ENCODE measurements at regions of chr1 and their contacts with region 1.

Region 1: DNA sequence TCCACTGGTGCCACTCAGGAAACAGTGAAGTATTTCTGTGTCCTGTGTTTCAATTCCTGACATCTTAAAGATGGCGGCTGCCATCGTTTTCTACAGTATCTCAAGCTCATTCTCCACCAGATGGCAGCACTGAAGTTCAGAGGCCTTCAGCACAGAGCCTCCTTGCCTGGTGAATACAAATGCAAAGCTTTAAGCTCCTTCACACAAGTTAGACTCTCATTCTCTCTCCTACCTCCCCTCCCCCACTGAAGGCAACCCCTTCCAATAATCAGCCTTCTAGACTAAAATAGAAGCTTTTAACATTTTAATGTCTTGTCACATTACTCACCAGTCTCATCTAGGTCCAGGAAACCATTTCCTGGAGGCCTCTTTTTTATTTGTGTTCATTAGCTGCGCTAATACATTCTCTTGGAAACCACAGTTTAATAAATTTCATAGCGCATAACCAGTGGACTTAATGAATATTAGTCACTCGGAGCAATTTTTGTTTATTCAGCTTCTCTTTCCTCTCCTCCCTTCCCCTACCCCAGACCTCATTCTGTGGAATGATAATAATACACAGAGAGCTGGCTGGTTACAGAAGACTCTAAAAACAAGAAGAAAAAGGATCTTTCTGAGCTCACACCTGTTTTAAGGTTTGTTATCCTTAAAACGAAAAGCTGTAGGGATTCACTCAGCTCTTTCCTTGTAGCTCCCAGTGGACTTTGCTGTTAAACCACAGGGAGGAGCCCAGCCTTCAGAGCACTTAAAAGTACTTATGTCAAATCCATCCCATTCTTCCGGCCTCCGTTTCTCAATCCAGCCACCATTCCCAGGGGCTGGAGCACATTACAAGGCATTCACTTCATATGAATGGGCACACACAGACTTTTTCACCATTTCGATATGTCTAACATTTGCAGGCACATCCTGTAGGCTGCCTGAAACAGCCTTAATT is 384.9 kb downstream of the HLX start:
- DNase-seq: peak; percentile 93
- H3K4me3 Mint-ChIP-seq: no peak overlapping the region
- H3K27ac Mint-ChIP-seq: peak overlapping the region; percentile 42
- H3K4me1 Mint-ChIP-seq: peaks cover 5% of the 10 kb centered on the region
- H3K27me3 Mint-ChIP-seq: no peaks in the 10 kb centered on the region
- CTCF ChIP-seq: peak; percentile 72

Region 2: GRCh38 chr1:221239792-221240191 is 24.3 kb before region 1 on chr1:
- CTCF ChIA-PET with region 1: interaction called, 14 read pairs
- POLR2A ChIA-PET with region 1: interaction called, 4 read pairs
- intact Hi-C with region 1: no loop called
- DNase-seq: peak; percentile 29
- H3K4me3 Mint-ChIP-seq: no peak overlapping the region
- H3K27ac Mint-ChIP-seq: no peak overlapping the region
- H3K4me1 Mint-ChIP-seq: peaks cover 6% of the 10 kb centered on the region
- H3K27me3 Mint-ChIP-seq: no peaks in the 10 kb centered on the region
- CTCF ChIP-seq: no peak

Region 3: DNA sequence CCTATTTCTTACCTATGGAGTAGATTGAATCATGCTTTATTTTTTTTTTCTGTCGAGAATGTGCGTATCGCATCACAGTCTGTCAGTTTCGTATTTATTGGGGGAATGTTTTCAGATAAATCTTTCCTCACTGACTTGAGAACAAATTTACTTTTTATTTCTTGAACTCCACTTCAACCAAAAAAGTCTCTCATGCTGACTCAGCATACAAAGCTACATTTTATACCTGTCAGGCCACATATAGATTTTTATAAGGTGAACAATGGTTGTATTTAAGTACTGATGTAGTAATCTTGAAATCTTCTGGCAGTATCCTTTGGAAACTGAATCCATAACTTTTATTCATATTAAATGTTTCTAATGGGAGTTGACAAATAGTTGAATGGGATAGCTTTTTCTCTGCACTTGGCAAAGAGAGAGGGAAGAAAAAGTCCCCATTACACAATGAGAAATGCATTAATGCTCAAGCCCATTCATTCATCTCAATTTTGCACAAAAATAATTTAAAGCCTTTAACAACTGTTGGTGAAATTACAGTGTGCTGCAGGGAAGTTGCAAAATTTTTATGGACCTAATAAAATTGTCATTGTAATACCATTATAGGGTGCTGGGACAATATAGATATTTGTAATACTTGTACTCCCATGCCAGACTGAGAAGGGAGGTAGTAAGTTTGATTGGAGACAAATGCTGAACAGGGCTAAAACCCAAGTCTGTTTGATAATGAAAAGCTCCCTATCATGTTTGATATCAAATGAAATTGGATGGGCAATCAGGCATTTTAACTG is 17.3 kb before region 1 on chr1:
- CTCF ChIA-PET with region 1: interaction called, 27 read pairs
- POLR2A ChIA-PET with region 1: interaction called, 4 read pairs
- intact Hi-C with region 1: no loop called
- DNase-seq: no peak
- H3K4me3 Mint-ChIP-seq: no peak overlapping the region
- H3K27ac Mint-ChIP-seq: no peak overlapping the region
- H3K4me1 Mint-ChIP-seq: no peaks in the 10 kb centered on the region
- H3K27me3 Mint-ChIP-seq: no peaks in the 10 kb centered on the region
- CTCF ChIP-seq: no peak

Measured in MCF 10A (cell line).